ENCODE measurements at regions of chr3 and their contacts with region 1.

Region 1: DNA sequence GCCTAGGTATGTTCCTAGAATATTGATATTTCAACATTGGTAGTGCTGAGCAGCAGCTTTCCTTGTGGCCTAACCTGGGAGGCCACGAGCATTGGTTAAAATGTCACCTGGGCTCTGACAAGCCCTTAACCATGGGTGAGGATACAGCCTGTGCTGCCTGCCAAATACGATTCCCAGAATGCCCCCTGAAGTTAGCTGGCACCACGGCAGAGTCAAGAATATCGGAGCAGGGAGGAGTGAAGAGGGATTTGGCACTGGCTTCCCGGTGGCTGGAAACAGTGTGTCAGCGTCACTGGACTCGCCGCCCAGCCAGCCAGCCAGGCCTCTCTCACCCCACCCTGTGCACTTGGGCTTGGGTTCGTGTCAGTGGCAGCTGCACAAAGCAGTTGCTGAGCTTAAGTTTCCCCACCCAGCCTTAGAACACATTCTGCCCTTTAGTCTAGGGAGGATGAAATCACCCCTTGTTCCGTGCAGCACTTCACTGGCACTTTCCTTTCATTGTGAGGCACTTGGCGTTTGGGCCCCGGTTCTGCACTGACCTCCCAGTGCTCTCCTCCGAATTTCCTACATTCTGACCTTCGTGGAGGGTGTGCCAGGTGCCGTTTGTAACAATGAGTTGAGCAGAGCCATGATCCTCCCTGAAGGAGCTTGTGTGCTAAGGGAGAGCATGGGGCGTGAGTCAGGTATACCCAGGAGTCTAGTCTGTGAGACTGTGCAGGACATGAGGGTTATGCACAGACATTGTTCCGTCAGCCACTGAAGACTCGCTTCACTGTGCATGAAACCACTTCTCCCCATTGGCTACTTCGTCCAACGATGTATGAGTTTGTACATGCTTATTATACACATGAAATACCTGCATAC is 152.8 kb upstream of the BHLHE40 start:
- DNase-seq: no peak
- H3K4me3 ChIP-seq: no peak overlapping the region
- H3K27ac ChIP-seq: peak overlapping the region; percentile 86
- H3K4me1 ChIP-seq: peaks cover 79% of the 10 kb centered on the region
- H3K27me3 ChIP-seq: no peaks in the 10 kb centered on the region
- CTCF ChIP-seq: no peak

Region 2: GRCh38 chr3:4474683-4475490 is 351.6 kb before region 1 on chr3:
- CTCF ChIA-PET with region 1: no interaction called
- POLR2A ChIA-PET with region 1: no interaction called
- intact Hi-C with region 1: no loop called
- DNase-seq: peak; percentile 42 to 70
- H3K4me3 ChIP-seq: no peak overlapping the region
- H3K27ac ChIP-seq: peak overlapping the region; percentile 29; the same call in 1 of the 2 replicates
- H3K4me1 ChIP-seq: no peaks in the 10 kb centered on the region; the same call in 1 of the 2 replicates
- H3K27me3 ChIP-seq: no peaks in the 10 kb centered on the region
- CTCF ChIP-seq: no peak

Region 3: GRCh38 chr3:4712143-4712542 is 114.3 kb before region 1 on chr3:
- CTCF ChIA-PET with region 1: interaction called, 3 read pairs
- POLR2A ChIA-PET with region 1: no interaction called
- intact Hi-C with region 1: loop called (anchors 1 kb)
- DNase-seq: peak; percentile 69 to 91
- H3K4me3 ChIP-seq: 0 out of 2 replicates have a peak overlapping the region, but pooled peaks have one; percentile 23
- H3K27ac ChIP-seq: peak overlapping the region; percentile 87
- H3K4me1 ChIP-seq: peaks cover 13% of the 10 kb centered on the region
- H3K27me3 ChIP-seq: no peaks in the 10 kb centered on the region
- CTCF ChIP-seq: no peak

Region 4: GRCh38 chr3:4736284-4736861 is 90.1 kb before region 1 on chr3:
- CTCF ChIA-PET with region 1: no interaction called
- POLR2A ChIA-PET with region 1: no interaction called
- intact Hi-C with region 1: loop called (anchors 1 kb)
- DNase-seq: peak; percentile 86 to 92
- H3K4me3 ChIP-seq: peak overlapping the region; percentile 18; the same call in 1 of the 2 replicates
- H3K27ac ChIP-seq: peak overlapping the region; percentile 92
- H3K4me1 ChIP-seq: peaks cover 45% of the 10 kb centered on the region
- H3K27me3 ChIP-seq: no peaks in the 10 kb centered on the region
- CTCF ChIP-seq: no peak

Region 5: GRCh38 chr3:4880850-4881249 is 54.4 kb after region 1 on chr3:
- CTCF ChIA-PET with region 1: no interaction called
- POLR2A ChIA-PET with region 1: interaction called, 3 read pairs
- intact Hi-C with region 1: loop called (anchors 2 kb)
- DNase-seq: no peak
- H3K4me3 ChIP-seq: no peak overlapping the region
- H3K27ac ChIP-seq: no peak overlapping the region
- H3K4me1 ChIP-seq: peaks cover 12% of the 10 kb centered on the region
- H3K27me3 ChIP-seq: no peaks in the 10 kb centered on the region
- CTCF ChIP-seq: no peak

Region 6: GRCh38 chr3:5026331-5027218 is 200.1 kb after region 1 on chr3:
- CTCF ChIA-PET with region 1: no interaction called
- POLR2A ChIA-PET with region 1: no interaction called
- intact Hi-C with region 1: loop called (anchors 1 kb)
- DNase-seq: peak; percentile 64 to 87
- H3K4me3 ChIP-seq: peak overlapping the region; percentile 48; the same call in 1 of the 2 replicates
- H3K27ac ChIP-seq: peak overlapping the region; percentile 73
- H3K4me1 ChIP-seq: peaks cover 33% of the 10 kb centered on the region
- H3K27me3 ChIP-seq: no peaks in the 10 kb centered on the region
- CTCF ChIP-seq: peak; percentile 61

Region 7: DNA sequence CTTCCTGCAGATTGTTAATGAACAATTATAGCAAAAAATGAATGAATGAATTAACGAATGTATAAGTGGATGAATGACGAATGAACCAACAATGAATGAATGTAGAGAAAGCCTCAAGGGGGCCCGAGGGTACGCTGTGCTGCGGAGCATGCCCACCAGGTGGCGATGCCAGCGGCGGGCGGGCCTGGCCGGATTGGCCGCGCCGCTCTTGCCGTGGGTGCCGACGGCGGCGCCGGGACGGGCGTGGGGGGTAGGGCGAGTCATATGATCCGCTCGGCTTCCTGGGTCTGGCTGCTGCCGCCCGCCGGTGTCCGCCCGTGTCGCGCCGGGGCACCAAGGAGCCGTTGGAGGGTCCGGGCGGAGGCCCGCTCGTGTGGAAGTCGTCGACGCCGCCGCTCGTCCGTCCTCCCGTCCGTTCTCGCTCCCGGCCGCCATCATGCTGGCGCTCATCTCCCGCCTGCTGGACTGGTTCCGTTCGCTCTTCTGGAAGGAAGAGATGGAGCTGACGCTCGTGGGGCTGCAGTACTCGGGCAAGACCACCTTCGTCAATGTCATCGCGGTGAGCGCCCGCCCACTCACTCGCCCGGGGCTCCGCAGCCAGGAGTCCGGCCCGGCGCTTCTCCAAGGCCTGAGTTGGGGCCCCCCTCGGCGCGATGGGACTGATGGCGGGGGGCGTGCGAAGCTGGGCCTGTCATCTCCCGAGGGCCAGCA is 295.7 kb after region 1 on chr3 and contains the start of gene ARL8B:
- CTCF ChIA-PET with region 1: no interaction called
- POLR2A ChIA-PET with region 1: no interaction called
- intact Hi-C with region 1: loop called (anchors 1 kb)
- DNase-seq: peak; percentile 58 to 90
- H3K4me3 ChIP-seq: peak within 1 kb of the TSS; percentile 76
- H3K27ac ChIP-seq: peak within 1 kb of the TSS; percentile 85
- H3K4me1 ChIP-seq: peaks cover 26% of the 10 kb centered on the region
- H3K27me3 ChIP-seq: no peaks in the 10 kb centered on the region
- CTCF ChIP-seq: peak; percentile 72
- total RNA-seq, gene ARL8B: 45.4 and 49.5 TPM in 2 replicates

Measured in PC-9 (cell line).